ENCODE measurements at regions of chr3 and their contacts with region 1.

Region 1: GRCh38 chr3:124761250-124761796 is 31.1 kb downstream of the UMPS start:
- DNase-seq: peak; percentile 64 to 74 (median 69)
- H3K4me3 ChIP-seq: no peak overlapping the region
- H3K4me3 Mint-ChIP-seq: peak overlapping the region in 7 of 8 donors; percentile 44 to 84 (median 73)
- H3K27ac ChIP-seq: no peak overlapping the region
- H3K27ac Mint-ChIP-seq: peak overlapping the region in 3 of 7 donors; percentile 32 to 66 (median 62)
- H3K4me1 ChIP-seq: peaks cover 5% of the 10 kb centered on the region
- H3K4me1 Mint-ChIP-seq: peaks cover 3 to 9% (median 4%) of the 10 kb centered on the region in 4 donors
- H3K27me3 ChIP-seq: no peaks in the 10 kb centered on the region
- H3K27me3 Mint-ChIP-seq: no peaks in the 10 kb centered on the region

Region 2: DNA sequence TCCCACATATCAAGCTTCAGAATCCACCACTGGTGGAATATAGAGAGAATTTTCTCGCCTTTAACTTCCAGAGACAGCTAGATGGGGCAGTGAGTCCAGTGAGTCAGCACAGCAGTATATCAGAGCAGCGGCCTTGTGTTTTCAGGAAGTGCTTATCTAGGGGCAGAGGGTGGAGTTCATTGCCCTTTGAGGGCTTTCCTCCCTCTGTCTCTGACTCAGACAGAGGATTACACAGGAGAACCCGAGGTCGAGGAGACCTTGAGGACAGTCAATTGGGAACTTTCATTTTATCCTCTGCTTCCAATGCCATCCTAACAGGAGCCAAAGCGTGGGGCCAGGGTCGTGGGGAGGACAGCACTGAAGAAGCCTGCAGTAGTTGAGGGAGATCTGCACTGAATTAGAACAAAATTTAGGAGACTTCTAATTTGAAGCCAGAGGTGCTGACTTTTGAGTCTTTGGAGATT is 140.7 kb before region 1 on chr3:
- CTCF ChIA-PET with region 1: no interaction called
- POLR2A ChIA-PET with region 1: no interaction called
- intact Hi-C with region 1: no loop called
- DNase-seq: peak in 4 of 5 donors; percentile 9 to 19 (median 16)
- H3K4me3 ChIP-seq: peak overlapping the region in 1 of 2 donors; percentile 43
- H3K4me3 Mint-ChIP-seq: peak overlapping the region; percentile 65 to 85 (median 80)
- H3K27ac ChIP-seq: peak overlapping the region; percentile 36
- H3K27ac Mint-ChIP-seq: peak overlapping the region; percentile 62 to 95 (median 89)
- H3K4me1 ChIP-seq: peaks cover 23% of the 10 kb centered on the region
- H3K4me1 Mint-ChIP-seq: peaks cover 25 to 47% (median 32%) of the 10 kb centered on the region in 4 donors
- H3K27me3 ChIP-seq: no peaks in the 10 kb centered on the region
- H3K27me3 Mint-ChIP-seq: no peaks in the 10 kb centered on the region

Region 3: DNA sequence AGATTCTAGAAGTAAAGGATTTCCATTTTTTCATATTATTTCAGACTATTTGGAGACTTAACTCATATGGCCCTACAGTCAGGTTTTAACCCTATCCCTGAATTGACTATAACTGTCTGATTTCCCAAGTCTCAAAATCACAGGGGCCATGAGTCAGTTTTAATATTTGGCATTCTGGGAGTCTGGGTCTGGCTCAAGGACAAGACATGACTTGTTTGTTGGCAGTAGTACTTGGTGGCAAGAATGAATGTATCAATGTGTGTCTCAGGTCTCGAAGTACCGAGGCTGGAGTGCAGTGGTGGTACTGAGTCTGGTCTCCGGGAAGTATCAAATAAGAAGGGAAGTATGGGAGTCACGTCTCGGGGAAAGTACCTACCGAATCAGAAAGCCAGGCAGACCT is 20.3 kb before region 1 on chr3:
- CTCF ChIA-PET with region 1: interaction called, 18 read pairs
- POLR2A ChIA-PET with region 1: no interaction called
- intact Hi-C with region 1: no loop called
- DNase-seq: no peak
- H3K4me3 ChIP-seq: no peak overlapping the region
- H3K4me3 Mint-ChIP-seq: no peak overlapping the region
- H3K27ac ChIP-seq: no peak overlapping the region
- H3K27ac Mint-ChIP-seq: no peak overlapping the region
- H3K4me1 ChIP-seq: no peaks in the 10 kb centered on the region
- H3K4me1 Mint-ChIP-seq: peaks cover 8 to 12% (median 11%) of the 10 kb centered on the region in 4 donors
- H3K27me3 ChIP-seq: no peaks in the 10 kb centered on the region
- H3K27me3 Mint-ChIP-seq: no peaks in the 10 kb centered on the region

Region 4: GRCh38 chr3:124780761-124781475 is 19.6 kb after region 1 on chr3:
- CTCF ChIA-PET with region 1: interaction called, 23 read pairs
- POLR2A ChIA-PET with region 1: no interaction called
- intact Hi-C with region 1: no loop called
- DNase-seq: no peak
- H3K4me3 ChIP-seq: no peak overlapping the region
- H3K4me3 Mint-ChIP-seq: no peak overlapping the region
- H3K27ac ChIP-seq: no peak overlapping the region
- H3K27ac Mint-ChIP-seq: peak overlapping the region in 1 of 7 donors; percentile 5
- H3K4me1 ChIP-seq: peaks cover 6% of the 10 kb centered on the region
- H3K4me1 Mint-ChIP-seq: peaks cover 0 to 4% (median 4%) of the 10 kb centered on the region in 4 donors
- H3K27me3 ChIP-seq: no peaks in the 10 kb centered on the region
- H3K27me3 Mint-ChIP-seq: peaks cover 3 to 6% of the 10 kb centered on the region in 2 donors

Region 5: GRCh38 chr3:124845406-124845805 is 84.1 kb after region 1 on chr3:
- CTCF ChIA-PET with region 1: interaction called, 11 read pairs
- POLR2A ChIA-PET with region 1: no interaction called
- intact Hi-C with region 1: no loop called
- DNase-seq: no peak
- H3K4me3 ChIP-seq: no peak overlapping the region
- H3K4me3 Mint-ChIP-seq: no peak overlapping the region
- H3K27ac ChIP-seq: no peak overlapping the region
- H3K27ac Mint-ChIP-seq: no peak overlapping the region
- H3K4me1 ChIP-seq: no peaks in the 10 kb centered on the region
- H3K4me1 Mint-ChIP-seq: no peaks in the 10 kb centered on the region
- H3K27me3 ChIP-seq: no peaks in the 10 kb centered on the region
- H3K27me3 Mint-ChIP-seq: peaks cover 0 to 13% of the 10 kb centered on the region in 2 donors

Region 6: DNA sequence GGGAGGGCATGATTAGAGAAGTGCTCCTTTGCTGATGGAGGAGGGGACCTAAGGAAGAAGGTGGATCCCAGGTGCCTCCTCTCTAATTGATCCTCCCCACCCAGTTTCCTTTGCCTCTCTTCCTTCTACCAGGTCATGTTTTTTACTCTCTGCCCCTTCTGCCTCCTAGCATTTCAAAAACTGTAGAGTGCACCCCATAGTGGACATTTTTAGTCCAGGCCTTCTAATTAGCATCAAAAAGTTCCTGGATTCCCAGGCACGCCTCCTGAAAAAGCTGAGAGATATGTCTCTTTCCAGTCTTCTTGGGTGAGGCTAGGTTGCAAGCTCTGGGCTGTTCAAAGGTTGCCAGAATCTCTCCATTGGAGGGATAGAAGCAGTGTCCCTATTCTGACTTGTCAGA is 144.5 kb after region 1 on chr3:
- CTCF ChIA-PET with region 1: interaction called, 291 read pairs
- POLR2A ChIA-PET with region 1: interaction called, 20 read pairs
- intact Hi-C with region 1: loop called (anchors 1 kb)
- DNase-seq: no peak
- H3K4me3 ChIP-seq: no peak overlapping the region
- H3K4me3 Mint-ChIP-seq: no peak overlapping the region
- H3K27ac ChIP-seq: no peak overlapping the region
- H3K27ac Mint-ChIP-seq: peak overlapping the region in 1 of 7 donors; percentile 47
- H3K4me1 ChIP-seq: no peaks in the 10 kb centered on the region
- H3K4me1 Mint-ChIP-seq: peaks cover 1 to 6% (median 3%) of the 10 kb centered on the region in 4 donors
- H3K27me3 ChIP-seq: peaks cover 4% of the 10 kb centered on the region
- H3K27me3 Mint-ChIP-seq: peaks cover 7 to 13% of the 10 kb centered on the region in 2 donors

Region 7: DNA sequence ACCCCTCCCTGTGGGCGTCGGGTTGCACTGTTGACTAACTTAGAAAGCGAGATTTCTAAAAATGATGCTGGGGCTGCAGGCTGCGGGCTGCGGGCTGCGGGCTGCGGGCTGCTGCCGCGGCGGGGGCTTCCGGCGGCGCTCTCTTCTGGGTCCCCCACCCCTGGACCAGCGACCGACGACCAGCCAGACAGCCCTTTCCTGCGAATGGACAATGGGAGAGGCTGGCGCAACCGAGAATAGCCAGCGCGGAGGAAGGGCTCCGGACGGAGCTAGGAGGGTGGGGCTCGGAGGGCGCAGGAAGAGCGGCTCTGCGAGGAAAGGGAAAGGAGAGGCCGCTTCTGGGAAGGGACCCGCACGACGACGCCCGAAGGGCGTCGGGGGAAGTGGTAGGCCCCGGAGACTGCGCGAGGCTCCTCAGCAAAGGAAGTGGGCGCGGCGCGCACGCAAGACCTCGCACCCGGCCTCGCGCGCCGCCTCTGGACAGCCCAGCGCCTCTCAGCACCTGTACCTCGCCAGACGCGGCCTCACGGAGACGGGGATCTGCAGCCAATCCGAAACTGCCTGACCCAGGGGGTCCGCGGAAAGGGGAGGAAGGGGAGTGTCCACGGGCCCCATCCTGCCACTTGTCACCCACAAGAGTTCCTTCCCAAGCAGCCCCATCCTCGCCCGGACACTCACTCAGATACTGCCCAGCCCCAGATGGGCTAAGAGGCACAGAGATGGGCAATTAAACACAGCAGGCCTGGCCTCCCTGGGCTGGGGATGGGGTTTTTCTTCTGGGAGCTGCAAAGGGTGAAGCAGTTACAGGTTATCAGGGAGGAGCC is 380.5 kb after region 1 on chr3:
- CTCF ChIA-PET with region 1: no interaction called
- POLR2A ChIA-PET with region 1: no interaction called
- intact Hi-C with region 1: loop called (anchors 10 kb)
- DNase-seq: peak; percentile 56 to 66 (median 64)
- H3K4me3 ChIP-seq: peak overlapping the region; percentile 11 to 38
- H3K4me3 Mint-ChIP-seq: peak overlapping the region; percentile 65 to 86 (median 79)
- H3K27ac ChIP-seq: peak overlapping the region; percentile 29
- H3K27ac Mint-ChIP-seq: peak overlapping the region; percentile 64 to 77 (median 70)
- H3K4me1 ChIP-seq: peaks cover 21% of the 10 kb centered on the region
- H3K4me1 Mint-ChIP-seq: peaks cover 13 to 36% (median 24%) of the 10 kb centered on the region in 4 donors
- H3K27me3 ChIP-seq: no peaks in the 10 kb centered on the region
- H3K27me3 Mint-ChIP-seq: no peaks in the 10 kb centered on the region

Region 8: DNA sequence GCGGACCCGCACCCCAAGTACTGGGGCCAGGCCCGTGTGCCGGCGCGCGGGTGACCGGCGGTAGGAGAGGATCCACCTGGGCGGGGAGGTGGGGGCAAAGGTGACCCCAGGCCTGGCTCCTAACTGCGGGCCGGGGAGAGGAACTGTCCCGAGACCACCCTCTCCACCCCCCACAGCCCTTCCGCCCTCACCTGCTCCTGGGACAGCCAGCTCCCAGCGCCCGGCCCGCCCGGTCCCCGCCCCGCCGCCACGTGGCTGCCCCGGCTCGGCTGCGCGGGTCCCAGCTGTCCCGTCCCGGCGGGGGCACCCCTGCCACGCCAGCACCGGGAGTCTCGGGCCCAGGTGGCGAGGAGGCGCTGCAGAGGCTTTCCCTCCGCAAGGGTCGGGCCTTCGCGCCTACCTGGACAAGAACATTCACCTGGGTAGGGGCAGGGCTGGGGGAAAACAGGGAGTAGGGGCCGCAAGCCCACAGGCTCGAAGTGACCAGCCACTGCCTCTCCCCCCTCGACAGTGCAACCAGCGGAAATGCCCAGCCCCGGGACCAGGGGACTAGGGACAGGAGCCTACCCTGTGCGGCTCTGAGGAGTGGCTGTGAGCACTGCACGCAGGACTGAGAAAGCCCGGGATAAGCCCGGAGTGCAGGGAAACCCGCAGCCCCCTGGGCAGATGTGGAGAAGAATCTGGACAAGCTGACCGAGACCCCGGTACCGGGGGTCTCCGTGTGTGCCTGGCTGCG is 451.4 kb after region 1 on chr3 and contains the start of gene SLC12A8:
- CTCF ChIA-PET with region 1: no interaction called
- POLR2A ChIA-PET with region 1: no interaction called
- intact Hi-C with region 1: no loop called
- DNase-seq: peak in 1 of 5 donors; percentile 3
- H3K4me3 ChIP-seq: no peak within 1 kb of the TSS
- H3K4me3 Mint-ChIP-seq: peak within 1 kb of the TSS in 6 of 8 donors; percentile 14 to 70 (median 48)
- H3K27ac ChIP-seq: no peak within 1 kb of the TSS
- H3K27ac Mint-ChIP-seq: no peak within 1 kb of the TSS
- H3K4me1 ChIP-seq: peaks cover 6% of the 10 kb centered on the region
- H3K4me1 Mint-ChIP-seq: peaks cover 5 to 26% (median 9%) of the 10 kb centered on the region in 4 donors
- H3K27me3 ChIP-seq: peaks cover 19% of the 10 kb centered on the region
- H3K27me3 Mint-ChIP-seq: peaks cover 42 to 44% of the 10 kb centered on the region in 2 donors
- total RNA-seq, gene SLC12A8: not detected

Region 9: DNA sequence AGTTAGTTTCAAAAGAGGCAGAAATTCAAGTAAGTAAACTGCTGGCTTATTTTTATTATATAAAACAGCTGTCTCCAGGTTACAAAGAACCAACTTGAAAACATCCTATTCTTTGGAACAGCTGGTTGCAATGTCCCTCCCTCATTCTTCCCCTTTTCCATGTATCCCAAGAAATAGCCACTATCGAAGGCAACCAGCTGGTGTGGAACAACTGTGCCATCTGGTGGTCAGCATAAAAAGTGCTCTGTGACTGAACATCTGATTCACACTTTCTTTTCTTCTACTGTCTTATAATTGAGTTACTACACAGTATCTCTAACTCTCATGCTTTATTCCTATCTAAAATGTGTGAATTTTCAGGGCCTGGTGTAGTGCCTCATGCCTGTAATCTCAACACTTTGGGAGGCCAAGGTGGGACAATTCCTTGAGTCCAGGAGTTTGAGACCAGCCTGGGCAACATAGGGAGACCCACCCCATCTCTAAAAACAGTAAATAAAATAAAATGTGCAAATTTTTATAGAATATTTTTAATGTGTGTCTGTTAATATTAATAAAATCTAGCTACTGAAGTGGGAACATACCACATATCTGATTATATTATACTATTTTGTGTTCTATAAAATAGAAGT is 824.4 kb after region 1 on chr3:
- CTCF ChIA-PET with region 1: interaction called, 14 read pairs
- POLR2A ChIA-PET with region 1: no interaction called
- intact Hi-C with region 1: loop called (anchors 1 kb)
- DNase-seq: peak in 4 of 5 donors; percentile 24 to 33 (median 31)
- H3K4me3 ChIP-seq: no peak overlapping the region
- H3K4me3 Mint-ChIP-seq: peak overlapping the region in 2 of 8 donors; percentile 29 to 30
- H3K27ac ChIP-seq: no peak overlapping the region
- H3K27ac Mint-ChIP-seq: peak overlapping the region in 2 of 7 donors; percentile 29 to 43
- H3K4me1 ChIP-seq: peaks cover 22% of the 10 kb centered on the region
- H3K4me1 Mint-ChIP-seq: peaks cover 13 to 28% (median 19%) of the 10 kb centered on the region in 4 donors
- H3K27me3 ChIP-seq: no peaks in the 10 kb centered on the region
- H3K27me3 Mint-ChIP-seq: no peaks in the 10 kb centered on the region

Measured in CD4-positive, alpha-beta memory T cell (primary cell).